ENCODE measurements at regions of chr10 and their contacts with region 1.

Region 1: GRCh38 chr10:61896854-61897661 is 4.4 kb upstream of the ARID5B start:
- DNase-seq: peak; percentile 66
- H3K4me3 Mint-ChIP-seq: peak overlapping the region; percentile 68
- H3K27ac Mint-ChIP-seq: peak overlapping the region; percentile 98
- H3K4me1 Mint-ChIP-seq: peaks cover 29% of the 10 kb centered on the region
- H3K27me3 Mint-ChIP-seq: no peaks in the 10 kb centered on the region

Region 2: GRCh38 chr10:61765176-61766087 is 131.6 kb before region 1 on chr10:
- CTCF ChIA-PET with region 1: interaction called, 4 read pairs
- POLR2A ChIA-PET with region 1: interaction called, 11 read pairs
- DNase-seq: no peak
- H3K4me3 Mint-ChIP-seq: no peak overlapping the region
- H3K27ac Mint-ChIP-seq: peak overlapping the region; percentile 70
- H3K4me1 Mint-ChIP-seq: peaks cover 22% of the 10 kb centered on the region
- H3K27me3 Mint-ChIP-seq: no peaks in the 10 kb centered on the region

Region 3: DNA sequence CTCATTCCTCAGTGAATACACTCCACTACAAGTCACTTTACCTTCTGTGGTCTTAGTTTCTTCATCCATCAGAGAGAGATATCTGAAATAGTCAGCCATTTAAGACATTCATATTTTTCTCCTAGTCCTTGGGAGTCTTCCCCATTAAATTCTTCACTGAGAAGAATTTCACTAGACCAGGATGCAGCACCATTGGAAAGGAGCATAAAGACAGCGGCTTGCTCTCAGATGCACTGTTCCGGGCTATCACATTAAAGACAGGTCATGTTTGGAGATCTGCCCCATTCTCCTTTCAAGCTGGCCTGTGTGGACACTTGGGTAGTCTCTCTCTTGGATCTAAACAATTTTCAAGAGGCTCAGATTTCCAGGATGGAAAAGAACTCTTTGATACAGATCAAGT is 27.8 kb before region 1 on chr10:
- CTCF ChIA-PET with region 1: interaction called, 8 read pairs
- POLR2A ChIA-PET with region 1: interaction called, 19 read pairs
- DNase-seq: no peak
- H3K4me3 Mint-ChIP-seq: no peak overlapping the region
- H3K27ac Mint-ChIP-seq: no peak overlapping the region
- H3K4me1 Mint-ChIP-seq: peaks cover 13% of the 10 kb centered on the region
- H3K27me3 Mint-ChIP-seq: peaks cover 5% of the 10 kb centered on the region

Region 4: GRCh38 chr10:62019013-62019684 is 122.1 kb after region 1 on chr10:
- CTCF ChIA-PET with region 1: interaction called, 3 read pairs
- POLR2A ChIA-PET with region 1: interaction called, 20 read pairs
- DNase-seq: no peak
- H3K4me3 Mint-ChIP-seq: no peak overlapping the region
- H3K27ac Mint-ChIP-seq: peak overlapping the region; percentile 71
- H3K4me1 Mint-ChIP-seq: peaks cover 77% of the 10 kb centered on the region
- H3K27me3 Mint-ChIP-seq: no peaks in the 10 kb centered on the region

Region 5: DNA sequence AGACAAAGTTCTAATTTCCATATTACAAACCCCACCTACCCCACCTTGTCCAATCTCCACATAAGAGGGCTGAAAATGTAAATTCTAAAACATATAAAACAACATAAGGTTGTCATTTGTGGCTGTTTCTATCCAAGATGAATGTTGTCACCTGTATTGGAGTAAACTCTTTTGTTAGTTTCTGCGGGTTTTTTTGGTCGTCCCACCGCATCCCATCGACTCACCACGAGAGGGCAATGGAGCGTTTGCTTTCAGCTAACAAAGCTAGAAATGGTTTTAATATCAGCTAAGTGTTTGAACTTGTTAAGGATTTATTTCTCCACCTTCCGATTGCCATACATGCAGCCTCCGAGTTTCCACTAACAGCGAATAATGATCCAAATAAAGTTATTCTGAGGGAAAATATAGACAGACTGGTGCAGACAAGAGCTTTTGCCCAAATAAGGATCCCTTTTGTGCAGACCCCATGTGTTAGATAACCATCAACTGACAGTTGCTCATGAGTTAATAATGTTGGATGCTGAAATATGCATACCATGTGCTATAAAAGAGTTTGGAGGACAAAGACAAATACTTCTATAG is 141.6 kb after region 1 on chr10:
- CTCF ChIA-PET with region 1: interaction called, 19 read pairs
- POLR2A ChIA-PET with region 1: interaction called, 131 read pairs
- DNase-seq: peak; percentile 83
- H3K4me3 Mint-ChIP-seq: peak overlapping the region; percentile 54
- H3K27ac Mint-ChIP-seq: peak overlapping the region; percentile 74
- H3K4me1 Mint-ChIP-seq: peaks cover 72% of the 10 kb centered on the region
- H3K27me3 Mint-ChIP-seq: no peaks in the 10 kb centered on the region

Region 6: GRCh38 chr10:62082729-62083411 is 185.8 kb after region 1 on chr10:
- CTCF ChIA-PET with region 1: interaction called, 6 read pairs
- POLR2A ChIA-PET with region 1: interaction called, 15 read pairs
- DNase-seq: peak; percentile 69
- H3K4me3 Mint-ChIP-seq: peak overlapping the region; percentile 61
- H3K27ac Mint-ChIP-seq: peak overlapping the region; percentile 92
- H3K4me1 Mint-ChIP-seq: peaks cover 81% of the 10 kb centered on the region
- H3K27me3 Mint-ChIP-seq: no peaks in the 10 kb centered on the region

Measured in activated CD4-positive, alpha-beta memory T cell treated with anti-CD3 and anti-CD28 coated beads, Interleukin-2, amount 10 ng/mL, durations not matched to agents 7 days and 5 days (primary cell).